Mammary epithelial cell (primary cell): ENCODE measurements at regions of chr1 and their contacts with region 1.

Region 1: DNA sequence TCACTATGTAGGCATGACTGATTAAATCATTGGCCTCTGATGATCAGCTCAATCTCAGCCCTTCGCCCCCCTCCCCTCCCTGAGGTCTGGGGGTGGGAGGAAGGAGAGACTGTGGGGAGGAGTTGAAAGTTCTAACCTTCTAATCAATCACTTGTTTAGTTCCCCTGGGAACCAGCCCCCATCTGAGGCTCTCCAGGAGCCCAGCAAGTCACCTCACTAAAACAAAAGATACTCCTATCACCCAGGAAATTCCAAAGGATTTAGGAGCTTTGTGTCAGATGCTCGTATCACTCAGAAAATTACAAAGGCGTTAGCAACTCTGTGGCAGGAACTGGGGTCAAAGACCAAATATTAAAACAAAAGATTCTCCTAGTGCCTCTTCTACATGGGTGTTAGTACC is 21.6 kb downstream of the SYF2 start:
- DNase-seq: no peak
- H3K4me3 ChIP-seq: no peak overlapping the region
- H3K27ac ChIP-seq: no peak overlapping the region
- H3K4me1 ChIP-seq: no peaks in the 10 kb centered on the region
- H3K27me3 ChIP-seq: no peaks in the 10 kb centered on the region
- CTCF ChIP-seq: no peak

Region 2: GRCh38 chr1:25042331-25043227 is 168.1 kb before region 1 on chr1:
- CTCF ChIA-PET with region 1: no interaction called
- dilution Hi-C with region 1: loop called (anchors 5 kb)
- in situ Hi-C with region 1: no loop called
- intact Hi-C with region 1: no loop called
- DNase-seq: peak; percentile 73
- H3K4me3 ChIP-seq: no peak overlapping the region
- H3K27ac ChIP-seq: no peak overlapping the region
- H3K4me1 ChIP-seq: peaks cover 11% of the 10 kb centered on the region
- H3K27me3 ChIP-seq: no peaks in the 10 kb centered on the region
- CTCF ChIP-seq: no peak

Region 3: GRCh38 chr1:25134801-25135461 is 75.8 kb before region 1 on chr1:
- CTCF ChIA-PET with region 1: interaction called, 8 read pairs
- dilution Hi-C with region 1: loop called (anchors 5 kb)
- in situ Hi-C with region 1: no loop called
- intact Hi-C with region 1: no loop called
- DNase-seq: no peak
- H3K4me3 ChIP-seq: no peak overlapping the region
- H3K27ac ChIP-seq: no peak overlapping the region
- H3K4me1 ChIP-seq: peaks cover 17% of the 10 kb centered on the region
- H3K27me3 ChIP-seq: no peaks in the 10 kb centered on the region
- CTCF ChIP-seq: no peak

Region 4: DNA sequence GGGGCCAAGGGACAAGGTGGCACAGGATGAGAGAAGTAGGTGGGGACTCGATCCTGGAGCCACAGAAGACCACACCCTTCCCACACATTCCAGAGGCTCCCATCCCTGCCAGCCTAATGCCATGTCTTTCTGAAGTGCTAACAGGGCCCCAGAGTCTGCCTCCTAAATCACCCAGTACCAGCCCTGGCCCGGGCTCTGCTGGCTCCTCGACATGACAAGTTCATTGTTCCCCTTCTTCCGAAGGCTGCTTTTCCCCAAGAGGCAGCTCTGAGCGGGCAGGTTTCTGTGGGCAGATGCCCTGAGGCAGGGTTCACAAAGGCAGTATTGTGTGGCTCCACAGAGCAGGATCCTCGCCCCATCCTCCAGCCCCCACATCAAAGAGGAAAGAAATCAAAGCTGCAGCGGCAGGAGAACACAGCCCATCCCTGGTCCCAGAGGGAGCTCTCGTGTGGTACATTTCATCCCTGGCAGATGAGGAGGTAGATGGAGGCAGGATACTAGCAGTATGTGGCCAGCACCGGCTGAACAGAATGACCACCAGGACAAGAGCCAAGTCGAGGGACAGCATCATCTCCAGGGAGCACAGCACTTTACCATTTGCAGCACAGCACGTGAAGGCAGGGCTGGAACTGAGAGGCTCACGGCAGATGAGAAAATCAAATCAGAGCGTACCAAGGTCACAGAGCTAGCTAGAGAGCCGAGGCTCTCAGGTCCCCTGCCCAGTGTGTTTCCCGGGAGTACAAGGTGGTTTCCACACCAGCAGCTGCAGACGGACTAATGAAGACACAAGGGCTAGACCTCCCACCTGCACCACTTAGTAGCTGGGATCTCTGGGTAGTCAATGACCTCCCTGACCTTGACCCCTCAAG is 43.2 kb before region 1 on chr1:
- CTCF ChIA-PET with region 1: no interaction called
- dilution Hi-C with region 1: no loop called
- in situ Hi-C with region 1: no loop called
- intact Hi-C with region 1: no loop called
- DNase-seq: peak; percentile 89
- H3K4me3 ChIP-seq: no peak overlapping the region
- H3K27ac ChIP-seq: no peak overlapping the region
- H3K4me1 ChIP-seq: peaks cover 13% of the 10 kb centered on the region
- H3K27me3 ChIP-seq: no peaks in the 10 kb centered on the region
- CTCF ChIP-seq: no peak